ENCODE measurements at regions of chr6 and their contacts with region 1.

Region 1: DNA sequence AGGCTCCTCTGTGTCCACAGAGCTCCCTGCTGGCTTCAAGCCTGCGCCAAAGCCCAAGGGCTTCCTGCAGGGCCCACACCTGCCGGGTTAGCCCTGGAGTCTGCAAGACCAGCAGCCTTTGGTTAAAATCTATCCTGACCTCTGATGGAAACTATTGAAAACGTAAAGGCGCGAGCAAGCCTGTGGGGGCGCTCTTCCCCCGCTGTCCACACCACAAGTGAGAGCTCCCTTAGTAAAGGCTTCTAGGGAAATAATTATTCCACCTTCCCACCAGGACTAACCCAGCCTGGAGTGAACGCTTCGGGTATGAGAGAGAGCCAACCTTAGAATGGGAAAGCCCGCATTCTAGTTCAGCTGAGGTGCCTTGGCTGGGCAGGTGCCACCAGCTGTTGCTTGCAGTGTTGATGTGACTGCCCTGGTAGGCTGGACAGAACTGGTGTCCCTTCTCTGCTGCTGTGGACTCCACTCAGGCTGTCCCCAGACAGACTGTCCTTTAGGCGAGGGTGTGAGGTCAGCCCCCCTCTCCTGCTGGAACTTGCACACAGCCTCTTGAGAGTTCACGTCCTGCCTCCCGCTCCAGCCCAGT is 68.7 kb downstream of the SYTL3 start:
- DNase-seq: peak; percentile 77
- ATAC-seq: peak; percentile 55
- H3K4me3 ChIP-seq: no peak overlapping the region
- H3K27ac ChIP-seq: peak overlapping the region; percentile 97
- H3K4me1 ChIP-seq: peaks cover 73 to 92% of the 10 kb centered on the region in 2 experiments
- H3K27me3 ChIP-seq: no peaks in the 10 kb centered on the region
- CTCF ChIP-seq: peak in 2 of 3 experiments; percentile 99 to 100; a peak in 4 of 6 replicates
- POLR2A ChIP-seq: no peak
- RAD21 ChIP-seq: no peak

Region 2: GRCh38 chr6:158452182-158452581 is 266.4 kb before region 1 on chr6:
- CTCF ChIA-PET with region 1: no interaction called
- POLR2A ChIA-PET with region 1: no interaction called
- RAD21 ChIA-PET with region 1: no interaction called
- intact Hi-C with region 1: no loop called
- DNase-seq: no peak
- ATAC-seq: no peak
- H3K4me3 ChIP-seq: no peak overlapping the region
- H3K27ac ChIP-seq: no peak overlapping the region
- H3K4me1 ChIP-seq: no peaks in the 10 kb centered on the region
- H3K27me3 ChIP-seq: no peaks in the 10 kb centered on the region
- CTCF ChIP-seq: no peak
- POLR2A ChIP-seq: no peak
- RAD21 ChIP-seq: no peak

Region 3: DNA sequence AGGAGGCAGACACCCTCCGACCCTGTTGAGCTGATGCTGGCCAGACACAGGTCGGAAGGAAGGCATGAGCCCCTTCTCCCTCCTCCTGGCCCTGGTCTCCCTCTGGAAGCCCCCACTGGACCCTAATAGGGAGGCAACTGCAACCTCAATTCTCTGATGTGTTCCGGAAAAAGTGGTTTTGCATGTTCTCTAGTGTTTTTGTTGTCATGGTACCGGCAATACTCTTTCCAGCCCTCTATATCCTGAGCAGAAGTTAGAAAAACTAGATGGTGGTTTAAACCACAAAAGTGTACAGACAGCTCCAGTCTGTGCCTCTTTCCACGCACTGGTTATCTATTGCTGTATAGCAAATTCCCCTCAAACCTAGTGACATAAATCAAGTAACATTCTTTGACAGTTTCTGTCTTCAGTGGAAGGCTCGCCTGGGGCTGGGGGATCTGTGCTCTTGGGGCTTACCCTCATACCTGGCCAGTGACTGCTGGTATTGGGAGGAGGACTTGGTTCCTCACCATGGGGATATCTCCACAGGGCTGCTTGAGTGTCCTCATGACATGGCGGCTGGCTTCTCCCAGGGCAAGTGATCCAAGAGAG is 31.7 kb before region 1 on chr6:
- CTCF ChIA-PET with region 1: interaction called, 15 read pairs
- POLR2A ChIA-PET with region 1: interaction called, 3 read pairs
- RAD21 ChIA-PET with region 1: interaction called in 1 of 2 experiments, 4 read pairs
- intact Hi-C with region 1: no loop called
- DNase-seq: no peak
- ATAC-seq: peak; percentile 50
- H3K4me3 ChIP-seq: no peak overlapping the region
- H3K27ac ChIP-seq: peak overlapping the region; percentile 67
- H3K4me1 ChIP-seq: peaks cover 16 to 24% of the 10 kb centered on the region in 2 experiments
- H3K27me3 ChIP-seq: no peaks in the 10 kb centered on the region
- CTCF ChIP-seq: no peak
- POLR2A ChIP-seq: no peak
- RAD21 ChIP-seq: no peak

Region 4: DNA sequence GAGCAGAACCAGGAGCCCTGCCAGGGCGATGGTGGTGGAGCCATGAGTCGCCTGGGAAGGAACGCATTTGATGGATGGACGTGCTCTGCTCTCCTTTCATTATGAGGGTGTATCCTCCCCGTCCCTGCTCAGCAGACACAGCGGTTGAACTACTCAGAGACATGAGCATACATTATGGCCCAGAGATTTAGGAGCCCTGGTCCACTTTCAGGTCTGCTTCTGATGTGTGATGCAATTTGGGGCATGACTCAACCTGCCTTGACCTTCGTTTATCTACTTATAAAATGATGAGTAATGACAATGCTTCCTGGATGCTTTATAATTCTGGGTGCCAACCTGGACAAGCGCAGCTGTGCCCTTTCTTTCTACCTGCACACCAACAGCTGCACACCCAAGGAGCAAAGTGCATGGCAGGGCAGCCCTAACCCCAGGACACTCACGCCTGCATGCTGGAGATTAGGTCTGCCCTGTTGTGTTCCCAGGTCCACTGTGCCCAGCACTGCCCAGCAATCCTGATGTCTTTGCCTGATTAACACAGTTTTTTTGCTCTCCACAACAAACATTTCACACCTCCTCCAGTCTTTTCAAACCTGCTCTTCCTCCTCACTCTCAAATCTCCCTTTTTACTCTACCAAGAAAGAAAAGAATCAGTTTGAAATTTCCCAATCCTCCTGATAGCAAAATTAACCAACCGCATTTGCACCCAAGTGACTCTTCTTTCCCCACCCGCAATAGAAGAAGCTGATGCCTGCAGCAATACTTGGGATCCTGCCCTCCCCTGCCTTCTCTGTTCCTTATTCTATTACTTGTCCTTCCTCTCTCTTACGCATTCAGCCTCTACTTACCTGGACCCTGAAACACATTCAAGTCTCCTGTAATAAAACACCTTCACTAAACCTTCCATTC is 19.4 kb after region 1 on chr6:
- CTCF ChIA-PET with region 1: interaction called, 14 read pairs
- POLR2A ChIA-PET with region 1: interaction called, 19 read pairs
- RAD21 ChIA-PET with region 1: no interaction called
- intact Hi-C with region 1: no loop called
- DNase-seq: peak; percentile 92
- ATAC-seq: peak; percentile 77
- H3K4me3 ChIP-seq: no peak overlapping the region
- H3K27ac ChIP-seq: peak overlapping the region; percentile 97
- H3K4me1 ChIP-seq: peaks cover 58 to 88% of the 10 kb centered on the region in 2 experiments
- H3K27me3 ChIP-seq: no peaks in the 10 kb centered on the region
- CTCF ChIP-seq: no peak
- POLR2A ChIP-seq: no peak
- RAD21 ChIP-seq: no peak

Region 5: GRCh38 chr6:158762787-158763433 is 44.4 kb after region 1 on chr6:
- CTCF ChIA-PET with region 1: interaction called, 13 read pairs
- POLR2A ChIA-PET with region 1: interaction called, 5 read pairs
- RAD21 ChIA-PET with region 1: interaction called, 3 read pairs
- intact Hi-C with region 1: loop called (anchors 2 kb)
- DNase-seq: no peak
- ATAC-seq: peak; percentile 8
- H3K4me3 ChIP-seq: no peak overlapping the region
- H3K27ac ChIP-seq: peak overlapping the region; percentile 57
- H3K4me1 ChIP-seq: peaks cover 38 to 100% of the 10 kb centered on the region in 2 experiments; a peak in 3 of 4 replicates
- H3K27me3 ChIP-seq: no peaks in the 10 kb centered on the region
- CTCF ChIP-seq: no peak
- POLR2A ChIP-seq: no peak
- RAD21 ChIP-seq: no peak

Region 6: DNA sequence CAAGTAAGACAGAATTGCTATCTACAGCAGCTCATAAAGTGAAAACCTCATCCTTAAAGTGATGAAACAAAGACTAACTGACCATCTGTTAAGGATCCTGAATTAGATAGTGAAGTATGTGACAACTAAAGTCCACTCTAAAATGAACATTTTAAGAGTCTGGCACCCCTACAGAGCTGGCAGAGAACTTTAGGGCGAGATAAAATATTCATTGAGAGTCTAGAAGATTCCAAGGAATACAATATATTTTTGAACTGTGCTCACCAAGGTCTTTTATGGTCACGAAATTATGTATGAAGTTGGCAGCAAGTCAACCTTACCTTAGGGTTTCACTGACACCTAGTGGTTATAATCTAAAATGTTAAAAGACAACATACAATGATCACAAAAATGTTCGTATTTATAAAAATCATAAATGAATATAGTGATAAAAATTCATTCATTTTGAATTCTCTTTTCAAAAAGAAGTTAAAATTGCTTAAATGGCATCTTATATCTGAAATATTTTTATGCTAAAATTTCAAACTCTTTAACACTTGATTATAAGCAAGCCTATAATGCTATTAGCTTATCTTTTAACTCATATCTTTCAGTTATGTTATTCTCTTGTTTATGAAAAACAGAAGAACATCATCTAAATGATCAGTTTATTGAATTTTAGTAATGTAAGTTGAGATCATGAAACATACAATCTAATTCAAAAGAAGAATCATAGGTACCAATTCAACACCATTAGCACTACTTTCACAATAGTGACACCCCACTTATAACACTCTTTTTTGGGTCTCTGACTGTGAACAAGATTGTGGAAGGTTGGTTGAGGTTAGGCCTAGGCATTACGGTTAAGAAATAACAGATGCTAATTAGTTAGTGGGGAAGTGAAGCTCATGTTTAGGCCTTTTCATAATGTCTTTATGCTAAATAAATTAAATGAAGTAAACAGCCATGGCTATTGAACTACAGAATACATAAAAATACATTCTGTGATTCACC is 254.0 kb after region 1 on chr6:
- CTCF ChIA-PET with region 1: interaction called, 3 read pairs
- POLR2A ChIA-PET with region 1: no interaction called
- RAD21 ChIA-PET with region 1: no interaction called
- intact Hi-C with region 1: loop called (anchors 1 kb)
- DNase-seq: peak; percentile 55
- ATAC-seq: peak; percentile 72
- H3K4me3 ChIP-seq: no peak overlapping the region
- H3K27ac ChIP-seq: peak overlapping the region; percentile 6; the same call in 1 of the 2 replicates
- H3K4me1 ChIP-seq: peaks cover 0 to 20% of the 10 kb centered on the region in 2 experiments; a peak in 2 of 4 replicates
- H3K27me3 ChIP-seq: no peaks in the 10 kb centered on the region
- CTCF ChIP-seq: peak; percentile 31 to 70 (median 59); a peak in 5 of 6 replicates
- POLR2A ChIP-seq: no peak
- RAD21 ChIP-seq: peak; percentile 93

Region 7: GRCh38 chr6:159434410-159434809 is 715.9 kb after region 1 on chr6:
- CTCF ChIA-PET with region 1: no interaction called
- POLR2A ChIA-PET with region 1: no interaction called
- RAD21 ChIA-PET with region 1: no interaction called
- intact Hi-C with region 1: no loop called
- DNase-seq: no peak
- ATAC-seq: no peak
- H3K4me3 ChIP-seq: no peak overlapping the region
- H3K27ac ChIP-seq: no peak overlapping the region
- H3K4me1 ChIP-seq: no peaks in the 10 kb centered on the region
- H3K27me3 ChIP-seq: peaks cover 36% of the 10 kb centered on the region
- CTCF ChIP-seq: no peak
- POLR2A ChIP-seq: no peak
- RAD21 ChIP-seq: no peak

Measured in HCT116 (cell line).